Sigmoid colon (tissue), 7 donors: ENCODE measurements at regions of chr3 and their contacts with region 1.

Region 1: DNA sequence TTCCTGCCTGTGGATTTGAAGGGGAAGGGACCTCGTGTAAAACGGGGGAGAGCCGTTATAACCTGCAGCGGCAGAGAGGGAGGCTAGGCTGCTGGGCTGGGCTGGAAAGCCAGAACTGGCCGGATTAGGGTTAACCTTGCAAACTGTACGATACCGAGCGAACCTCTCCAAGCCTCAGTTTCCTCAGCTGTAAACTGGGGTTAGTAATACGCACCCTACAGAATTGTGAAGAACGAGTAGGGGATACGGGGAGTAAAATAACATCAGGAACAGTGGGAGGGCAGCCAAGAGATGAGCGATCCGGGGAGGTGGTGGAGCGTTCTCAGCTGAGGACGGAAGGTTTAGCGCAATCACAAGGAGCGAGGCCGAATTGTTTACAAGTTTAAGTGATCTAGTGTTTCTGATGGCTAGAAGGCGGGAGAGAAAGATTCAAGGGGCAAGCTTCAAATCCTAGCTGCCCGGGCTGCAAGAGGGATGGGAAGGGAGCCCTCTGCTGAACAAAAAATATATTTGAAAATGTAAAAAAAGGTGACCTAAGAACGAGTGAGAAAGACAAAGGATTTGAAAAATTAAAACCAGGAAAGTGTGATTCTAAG is 768 bp upstream of the SEMA5B start:
- DNase-seq: peak; percentile 74
- H3K4me3 ChIP-seq: peak overlapping the region; percentile 27 to 61 (median 52)
- H3K27ac ChIP-seq: peak overlapping the region in 2 of 4 donors; percentile 1 to 51
- H3K4me1 ChIP-seq: peaks cover 0 to 33% (median 31%) of the 10 kb centered on the region in 4 donors
- H3K27me3 ChIP-seq: peaks cover 12 to 81% (median 38%) of the 10 kb centered on the region in 3 donors
- CTCF ChIP-seq: peak; percentile 26 to 58 (median 44)
- EP300 ChIP-seq: no peak
- POLR2A ChIP-seq: no peak

Region 2: GRCh38 chr3:122793568-122794416 is 234.5 kb before region 1 on chr3 and contains the start of gene HSPBAP1:
- intact Hi-C with region 1: loop called (anchors 5 kb)
- DNase-seq: peak; percentile 96
- H3K4me3 ChIP-seq: peak within 1 kb of the TSS; percentile 70 to 94 (median 90)
- H3K27ac ChIP-seq: peak within 1 kb of the TSS; percentile 94 to 98 (median 98)
- H3K4me1 ChIP-seq: peaks cover 0 to 30% (median 24%) of the 10 kb centered on the region in 4 donors
- H3K27me3 ChIP-seq: no peaks in the 10 kb centered on the region
- CTCF ChIP-seq: no peak
- EP300 ChIP-seq: peak in 2 of 4 donors; percentile 18 to 43
- POLR2A ChIP-seq: peak; percentile 43 to 46
- total RNA-seq, gene HSPBAP1: 11.1 to 13.8 (median 12.6) TPM

Region 3: GRCh38 chr3:122942937-122943827 is 85.1 kb before region 1 on chr3:
- intact Hi-C with region 1: loop called (anchors 2 kb)
- DNase-seq: no peak
- H3K4me3 ChIP-seq: no peak overlapping the region
- H3K27ac ChIP-seq: no peak overlapping the region
- H3K4me1 ChIP-seq: peaks cover 0 to 14% (median 4%) of the 10 kb centered on the region in 4 donors
- H3K27me3 ChIP-seq: no peaks in the 10 kb centered on the region
- CTCF ChIP-seq: peak; percentile 58 to 90 (median 80)
- EP300 ChIP-seq: no peak
- POLR2A ChIP-seq: no peak

Region 4: DNA sequence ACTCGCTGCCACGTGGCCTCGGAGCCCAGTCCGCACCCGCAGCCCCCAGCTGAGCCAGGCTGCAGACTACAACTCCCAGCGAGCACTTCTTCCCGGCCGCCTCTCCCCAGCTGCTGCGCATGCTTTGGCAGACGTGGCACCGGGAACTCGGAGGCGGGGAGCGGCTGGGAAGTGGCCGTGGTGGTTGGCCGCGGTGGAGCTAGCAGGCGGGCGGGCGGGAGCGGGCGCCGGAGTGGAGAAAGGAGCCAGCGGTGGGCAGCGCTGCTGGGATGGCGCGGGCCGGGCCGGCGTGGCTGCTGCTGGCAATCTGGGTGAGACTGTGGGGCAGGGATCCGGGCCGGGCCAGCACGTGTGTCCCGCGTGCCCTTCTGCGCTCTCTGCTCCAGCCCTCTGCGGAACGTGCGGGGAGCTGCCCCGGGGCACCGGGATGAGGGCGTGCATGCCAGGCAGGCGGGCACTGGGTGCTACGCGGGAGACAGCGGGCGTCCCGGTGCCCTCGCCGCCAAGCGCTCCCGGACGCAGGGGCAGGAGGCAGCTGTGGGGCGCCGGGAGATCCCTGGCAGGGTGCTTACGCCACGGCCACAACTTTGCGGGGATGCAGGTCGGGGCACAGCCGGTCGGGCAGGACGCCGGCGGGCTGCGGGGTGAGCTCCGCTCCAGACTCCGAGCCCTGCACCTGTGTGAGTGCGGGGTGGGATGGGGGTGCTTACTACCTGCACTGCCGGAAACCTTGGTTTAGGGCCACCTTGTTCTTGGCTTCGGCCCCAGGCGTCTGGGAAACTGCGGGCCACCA is 38.8 kb after region 1 on chr3 and contains the start of gene PDIA5:
- intact Hi-C with region 1: loop called (anchors 2 kb)
- DNase-seq: peak; percentile 95
- H3K4me3 ChIP-seq: peak within 1 kb of the TSS; percentile 66 to 91 (median 86)
- H3K27ac ChIP-seq: peak within 1 kb of the TSS; percentile 73 to 88 (median 82)
- H3K4me1 ChIP-seq: peaks cover 0 to 47% (median 33%) of the 10 kb centered on the region in 4 donors
- H3K27me3 ChIP-seq: no peaks in the 10 kb centered on the region
- CTCF ChIP-seq: no peak
- EP300 ChIP-seq: no peak
- POLR2A ChIP-seq: peak; percentile 43 to 66
- total RNA-seq, gene PDIA5: 13.8 to 15.1 (median 14.2) TPM

Region 5: GRCh38 chr3:123201566-123202427 is 173.5 kb after region 1 on chr3 and contains the start of gene SEC22A:
- intact Hi-C with region 1: loop called (anchors 5 kb)
- DNase-seq: peak; percentile 96
- H3K4me3 ChIP-seq: peak within 1 kb of the TSS; percentile 85 to 97 (median 92)
- H3K27ac ChIP-seq: peak within 1 kb of the TSS; percentile 83 to 86 (median 86)
- H3K4me1 ChIP-seq: peaks cover 0 to 22% (median 9%) of the 10 kb centered on the region in 4 donors
- H3K27me3 ChIP-seq: no peaks in the 10 kb centered on the region
- CTCF ChIP-seq: no peak
- EP300 ChIP-seq: peak in 2 of 4 donors; percentile 5 to 18
- POLR2A ChIP-seq: peak; percentile 64 to 74
- total RNA-seq, gene SEC22A: 17.8 to 47.2 (median 31.4) TPM

Region 6: GRCh38 chr3:123258811-123259420 is 230.6 kb after region 1 on chr3:
- intact Hi-C with region 1: loop called (anchors 10 kb)
- DNase-seq: no peak
- H3K4me3 ChIP-seq: no peak overlapping the region
- H3K27ac ChIP-seq: no peak overlapping the region
- H3K4me1 ChIP-seq: no peaks in the 10 kb centered on the region
- H3K27me3 ChIP-seq: no peaks in the 10 kb centered on the region
- CTCF ChIP-seq: peak; percentile 32 to 51 (median 43)
- EP300 ChIP-seq: no peak
- POLR2A ChIP-seq: no peak